ENCODE measurements at regions of chr2 and their contacts with region 1.

Region 1: DNA sequence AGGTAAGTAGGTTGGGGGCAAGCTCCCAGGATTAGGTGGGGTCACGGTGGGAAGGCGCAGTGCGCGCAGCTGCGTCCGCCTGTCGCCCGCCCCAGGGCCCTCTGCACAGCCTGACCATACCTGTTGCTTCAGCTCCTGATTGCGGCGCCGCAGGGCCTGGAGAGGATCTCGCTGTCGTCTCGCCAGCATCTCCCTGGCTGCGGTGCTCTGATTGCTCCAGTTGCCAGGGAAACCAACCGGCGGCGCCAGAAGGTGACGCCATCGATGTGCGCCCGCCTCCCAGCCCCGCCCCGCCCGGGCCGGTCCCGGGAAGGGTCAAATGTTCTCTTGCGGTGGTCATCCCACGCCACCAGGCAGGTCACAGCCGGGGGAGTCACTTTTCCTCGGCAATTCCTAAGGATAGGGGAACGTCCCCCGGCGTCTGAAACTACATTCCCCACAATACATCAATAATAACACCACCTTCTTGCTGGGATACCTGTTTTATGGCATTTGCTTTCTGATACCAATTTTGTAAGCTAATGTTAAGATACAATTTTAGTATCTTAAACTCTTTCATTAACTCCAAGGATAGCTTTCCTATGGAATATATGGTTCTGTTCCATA is at the start of gene NPHP1:
- DNase-seq: peak; percentile 76 to 91 (median 85)
- ATAC-seq: peak; percentile 95
- H3K4me3 ChIP-seq: peak within 1 kb of the TSS; percentile 76
- H3K4me3 Mint-ChIP-seq: peak within 1 kb of the TSS; percentile 81 to 93 (median 88)
- H3K27ac ChIP-seq: peak within 1 kb of the TSS; percentile 72
- H3K27ac Mint-ChIP-seq: peak within 1 kb of the TSS; percentile 66 to 94 (median 90)
- H3K4me1 ChIP-seq: peaks cover 6 to 7% of the 10 kb centered on the region in 2 donors
- H3K4me1 Mint-ChIP-seq: peaks cover 13 to 37% (median 25%) of the 10 kb centered on the region in 7 donors
- H3K27me3 ChIP-seq: no peaks in the 10 kb centered on the region
- H3K27me3 Mint-ChIP-seq: peaks cover 0 to 5% (median 0%) of the 10 kb centered on the region in 5 donors
- total RNA-seq, gene NPHP1: 0.11 to 0.64 (median 0.46) TPM in 4 of 5 experiments, not detected in the other

Region 2: DNA sequence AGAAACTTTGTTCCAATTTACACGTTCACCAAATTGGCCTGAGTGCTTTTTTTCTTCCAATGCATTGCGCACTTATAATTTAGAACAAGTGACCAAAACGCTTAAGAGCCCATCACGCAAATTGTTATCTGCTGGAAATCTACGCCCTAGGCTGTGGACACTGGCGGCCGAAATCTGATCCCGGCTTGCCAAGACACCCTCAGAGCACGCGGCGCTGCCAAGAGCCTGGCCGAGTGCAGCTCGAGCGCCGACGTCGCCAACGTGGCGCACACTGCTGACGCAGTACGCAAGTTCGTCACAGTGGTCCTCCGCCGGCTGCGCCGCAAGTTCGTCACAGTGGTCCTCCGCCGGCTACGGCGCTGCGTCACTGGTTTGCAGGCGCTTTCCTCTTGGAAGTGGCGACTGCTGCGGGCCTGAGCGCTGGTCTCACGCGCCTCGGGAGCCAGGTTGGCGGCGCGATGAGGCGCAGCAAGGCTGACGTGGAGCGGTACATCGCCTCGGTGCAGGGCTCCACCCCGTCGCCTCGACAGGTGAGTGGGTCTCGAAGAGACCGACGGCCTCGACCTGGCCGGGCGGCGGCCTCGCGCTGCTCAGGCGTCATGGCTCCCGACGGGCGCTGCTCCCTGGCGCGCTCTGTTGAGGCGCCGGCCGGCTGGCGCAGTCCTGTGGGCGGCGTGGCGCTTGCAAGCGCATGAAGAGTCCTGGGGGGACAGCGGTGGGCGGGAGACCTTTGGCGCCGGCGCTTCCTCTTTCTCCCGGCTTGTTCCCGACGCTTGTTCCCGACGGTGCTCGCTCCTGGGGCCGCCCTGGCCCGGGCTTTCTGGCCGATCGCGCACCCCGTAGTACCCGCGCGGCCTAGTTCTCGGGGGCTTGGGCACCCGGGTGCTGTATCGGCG is 1485.5 kb before region 1 on chr2 and contains the start of gene RANBP2:
- CTCF ChIA-PET with region 1: no interaction called
- POLR2A ChIA-PET with region 1: no interaction called
- intact Hi-C with region 1: loop called in 1 of 2 experiments (anchors 10 kb)
- DNase-seq: peak; percentile 86 to 95 (median 93)
- ATAC-seq: peak; percentile 98
- H3K4me3 ChIP-seq: peak within 1 kb of the TSS; percentile 97
- H3K4me3 Mint-ChIP-seq: peak within 1 kb of the TSS; percentile 94 to 98 (median 97)
- H3K27ac ChIP-seq: peak within 1 kb of the TSS; percentile 96
- H3K27ac Mint-ChIP-seq: peak within 1 kb of the TSS; percentile 97 to 99 (median 99)
- H3K4me1 ChIP-seq: peaks cover 5 to 6% of the 10 kb centered on the region in 2 donors
- H3K4me1 Mint-ChIP-seq: peaks cover 14 to 43% (median 31%) of the 10 kb centered on the region in 7 donors
- H3K27me3 ChIP-seq: no peaks in the 10 kb centered on the region
- H3K27me3 Mint-ChIP-seq: no peaks in the 10 kb centered on the region
- total RNA-seq, gene RANBP2: 63.4 to 118 (median 88.6) TPM

Region 3: DNA sequence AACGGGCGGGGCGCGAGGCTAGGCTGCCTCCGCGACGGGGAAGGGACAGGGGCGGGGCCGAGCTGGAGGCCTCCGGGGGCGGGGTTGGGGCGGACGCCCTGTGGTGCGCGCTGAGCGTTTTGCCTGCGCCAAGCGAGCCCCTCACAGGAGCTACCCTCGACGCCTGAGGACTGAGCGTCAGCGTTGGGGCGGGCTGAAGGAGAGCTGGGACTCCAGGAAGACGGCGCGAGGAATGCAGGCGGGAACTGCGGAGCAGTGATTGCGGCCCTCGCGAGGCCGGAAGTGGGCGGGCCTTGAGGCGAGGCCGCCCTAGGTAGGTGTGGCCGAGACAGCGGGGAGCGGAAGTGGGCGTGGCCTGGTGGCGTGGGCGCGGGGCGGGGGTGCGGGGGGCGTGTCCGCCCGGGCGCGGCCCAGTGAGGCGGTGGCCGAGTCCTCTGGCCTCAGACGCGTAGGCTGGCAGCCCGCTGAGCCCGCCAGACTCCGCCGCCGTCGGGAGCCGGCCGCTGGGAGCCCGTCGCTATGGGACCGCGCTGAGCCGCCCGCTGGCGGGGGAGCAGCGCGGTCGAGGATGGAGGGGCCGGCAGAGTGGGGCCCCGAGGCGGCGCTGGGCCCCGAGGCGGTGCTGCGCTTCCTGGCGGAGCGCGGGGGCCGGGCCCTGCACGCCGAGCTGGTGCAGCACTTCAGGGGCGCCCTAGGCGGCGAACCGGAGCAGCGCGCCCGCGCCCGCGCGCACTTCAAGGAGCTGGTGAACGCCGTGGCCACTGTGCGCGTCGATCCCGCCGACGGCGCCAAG is 590.8 kb before region 1 on chr2 and contains the starts of genes SEPTIN10 and SOWAHC:
- CTCF ChIA-PET with region 1: no interaction called
- POLR2A ChIA-PET with region 1: no interaction called
- intact Hi-C with region 1: loop called in 1 of 2 experiments (anchors 10 kb)
- DNase-seq: peak; percentile 71 to 86 (median 84)
- ATAC-seq: peak; percentile 96
- H3K4me3 ChIP-seq: peak within 1 kb of the TSS; percentile 64
- H3K4me3 Mint-ChIP-seq: peak within 1 kb of the TSS; percentile 85 to 96 (median 90)
- H3K27ac ChIP-seq: no peak within 1 kb of the TSS
- H3K27ac Mint-ChIP-seq: peak within 1 kb of the TSS in 8 of 9 donors; percentile 27 to 89 (median 80)
- H3K4me1 ChIP-seq: no peaks in the 10 kb centered on the region
- H3K4me1 Mint-ChIP-seq: peaks cover 0 to 26% (median 16%) of the 10 kb centered on the region in 7 donors
- H3K27me3 ChIP-seq: peaks cover 3 to 23% of the 10 kb centered on the region in 2 donors
- H3K27me3 Mint-ChIP-seq: peaks cover 58 to 83% (median 62%) of the 10 kb centered on the region in 5 donors
- total RNA-seq, gene SEPTIN10: 0.94 to 5.9 (median 2.0) TPM
- total RNA-seq, gene SOWAHC: 0.17 to 1.2 (median 0.94) TPM

Region 4: GRCh38 chr2:109637749-109638570 is 566.9 kb before region 1 on chr2:
- CTCF ChIA-PET with region 1: no interaction called
- POLR2A ChIA-PET with region 1: no interaction called
- intact Hi-C with region 1: no loop called
- DNase-seq: no peak
- ATAC-seq: peak; percentile 54
- H3K4me3 ChIP-seq: no peak overlapping the region
- H3K4me3 Mint-ChIP-seq: peak overlapping the region in 2 of 10 donors; percentile 6 to 16
- H3K27ac ChIP-seq: no peak overlapping the region
- H3K27ac Mint-ChIP-seq: peak overlapping the region in 1 of 9 donors; percentile 79
- H3K4me1 ChIP-seq: no peaks in the 10 kb centered on the region
- H3K4me1 Mint-ChIP-seq: peaks cover 0 to 18% (median 5%) of the 10 kb centered on the region in 7 donors
- H3K27me3 ChIP-seq: no peaks in the 10 kb centered on the region
- H3K27me3 Mint-ChIP-seq: peaks cover 0 to 7% (median 0%) of the 10 kb centered on the region in 5 donors

Measured in naive thymus-derived CD4-positive, alpha-beta T cell (primary cell).